Activated CD4-positive, alpha-beta T cell treated with anti-CD3 and anti-CD28 coated beads for 36 hours (primary cell): ENCODE measurements at regions of chr15 and their contacts with region 1.

Region 1: GRCh38 chr15:36501063-36501678 is 78.3 kb upstream of the CDIN1 start:
- DNase-seq: peak; percentile 7
- ATAC-seq: peak; percentile 39
- H3K4me3 Mint-ChIP-seq: no peak overlapping the region
- H3K27ac Mint-ChIP-seq: no peak overlapping the region
- H3K4me1 Mint-ChIP-seq: no peaks in the 10 kb centered on the region
- H3K27me3 Mint-ChIP-seq: peaks cover 15% of the 10 kb centered on the region

Region 2: DNA sequence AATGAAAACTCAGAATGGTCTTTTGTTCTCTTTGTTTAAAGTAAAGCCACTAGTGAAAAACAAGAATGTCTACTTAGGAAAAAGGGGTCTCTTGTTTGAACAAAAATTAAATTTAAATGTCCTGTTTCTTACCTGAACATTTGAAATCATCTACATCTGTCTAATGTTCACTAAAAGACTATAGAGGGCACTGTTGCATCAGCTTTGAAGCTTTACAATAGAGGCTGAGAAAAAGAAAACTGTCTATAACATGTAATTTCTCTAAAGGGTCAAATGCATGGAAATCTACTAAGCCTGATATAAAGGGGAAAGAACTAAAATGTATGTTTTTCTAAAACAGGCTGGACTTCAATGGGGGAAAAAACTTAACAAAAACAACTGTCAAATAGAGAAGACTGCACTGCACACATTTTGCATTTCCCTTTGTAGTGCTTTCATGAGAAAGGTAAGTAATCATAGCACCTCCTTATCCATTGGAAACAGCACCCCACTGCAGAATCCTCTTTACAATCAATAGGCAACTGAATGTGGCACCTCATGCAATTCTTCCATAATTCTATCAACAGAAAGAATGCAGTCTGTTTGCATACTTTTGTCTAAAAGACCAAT is 981.5 kb before region 1 on chr15:
- CTCF ChIA-PET with region 1: no interaction called
- POLR2A ChIA-PET with region 1: no interaction called
- intact Hi-C with region 1: loop called in 1 of 2 experiments (anchors 5 kb)
- DNase-seq: no peak
- ATAC-seq: peak; percentile 65
- H3K4me3 Mint-ChIP-seq: no peak overlapping the region
- H3K27ac Mint-ChIP-seq: no peak overlapping the region
- H3K4me1 Mint-ChIP-seq: peaks cover 4% of the 10 kb centered on the region
- H3K27me3 Mint-ChIP-seq: no peaks in the 10 kb centered on the region

Region 3: GRCh38 chr15:36653851-36654250 is 152.7 kb after region 1 on chr15:
- CTCF ChIA-PET with region 1: no interaction called
- POLR2A ChIA-PET with region 1: no interaction called
- intact Hi-C with region 1: no loop called
- DNase-seq: no peak
- ATAC-seq: no peak
- H3K4me3 Mint-ChIP-seq: no peak overlapping the region
- H3K27ac Mint-ChIP-seq: no peak overlapping the region
- H3K4me1 Mint-ChIP-seq: no peaks in the 10 kb centered on the region
- H3K27me3 Mint-ChIP-seq: no peaks in the 10 kb centered on the region

Region 4: DNA sequence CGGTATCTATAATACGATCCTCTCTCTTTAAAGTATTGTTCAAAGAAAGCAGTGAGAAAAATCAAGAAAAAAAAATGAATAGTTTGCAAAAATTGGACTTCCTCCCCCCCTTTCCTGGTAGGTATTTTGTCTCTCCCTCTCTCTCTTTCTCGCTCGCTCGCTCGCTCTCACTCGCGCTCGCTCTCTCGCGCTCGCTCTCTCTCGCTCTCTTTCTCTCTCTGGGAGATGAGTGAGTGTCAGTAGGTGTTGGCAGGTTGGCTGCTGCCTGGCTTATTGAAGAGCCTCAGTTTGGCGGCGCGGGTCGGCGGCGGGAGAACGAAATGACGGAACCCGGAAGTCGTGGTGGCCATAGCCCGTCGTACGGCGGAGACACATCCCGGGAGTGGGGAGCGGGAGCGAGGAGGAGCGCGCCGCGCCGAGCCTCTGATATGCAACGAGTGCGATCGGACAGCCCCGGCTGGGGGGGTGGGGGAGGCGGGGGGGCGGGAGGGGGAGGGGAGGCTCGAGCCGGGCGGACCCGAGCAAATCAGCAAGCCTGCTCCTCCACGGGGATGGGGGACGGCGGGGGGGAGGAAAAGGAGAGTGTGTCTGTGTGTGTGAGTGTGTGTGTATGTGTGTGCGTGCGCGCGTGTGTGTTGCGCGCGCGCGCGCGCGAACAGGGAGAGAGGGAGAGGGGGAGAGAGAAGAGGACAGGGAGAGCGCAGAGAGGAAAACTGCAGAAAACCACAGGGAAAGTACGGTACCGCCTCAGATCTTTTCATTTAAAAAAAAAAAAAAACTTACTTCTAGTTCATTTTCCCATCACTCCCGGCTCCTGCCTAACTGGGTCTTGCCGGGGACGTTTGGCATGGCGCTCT is 599.2 kb after region 1 on chr15 and contains the start of gene MEIS2:
- CTCF ChIA-PET with region 1: no interaction called
- POLR2A ChIA-PET with region 1: no interaction called
- intact Hi-C with region 1: loop called in 1 of 2 experiments (anchors 10 kb)
- DNase-seq: peak; percentile 70
- ATAC-seq: peak; percentile 63
- H3K4me3 Mint-ChIP-seq: peak within 1 kb of the TSS; percentile 80
- H3K27ac Mint-ChIP-seq: peak within 1 kb of the TSS; percentile 51
- H3K4me1 Mint-ChIP-seq: peaks cover 37% of the 10 kb centered on the region
- H3K27me3 Mint-ChIP-seq: peaks cover 82% of the 10 kb centered on the region
- total RNA-seq, gene MEIS2: not detected

Region 5: DNA sequence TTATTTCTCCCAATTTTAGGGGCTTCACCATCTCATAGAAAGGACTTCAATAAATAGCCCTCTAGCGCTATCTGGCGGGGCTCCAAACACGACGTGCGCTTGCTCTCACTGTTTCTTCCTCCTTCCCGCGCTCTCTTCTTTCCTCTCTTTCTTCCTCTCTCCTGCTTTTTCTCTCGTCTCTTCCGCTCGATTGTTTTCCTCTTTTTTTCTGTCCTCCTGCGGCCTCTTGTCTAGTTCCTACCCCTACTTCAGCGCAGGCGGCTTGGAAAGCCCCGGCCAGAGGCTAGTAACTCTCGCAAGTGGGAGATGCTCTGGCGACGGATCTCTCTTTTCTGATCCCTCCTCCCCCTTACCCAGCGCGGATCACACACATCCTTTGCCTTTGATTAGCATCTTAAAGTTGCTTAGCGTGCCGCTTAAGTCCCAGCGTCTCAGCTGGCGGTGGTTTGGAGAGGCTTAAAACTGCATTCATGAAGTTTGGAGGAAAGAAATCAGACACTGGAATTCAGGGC is 605.4 kb after region 1 on chr15:
- CTCF ChIA-PET with region 1: no interaction called
- POLR2A ChIA-PET with region 1: no interaction called
- intact Hi-C with region 1: loop called (anchors 1 to 10 kb)
- DNase-seq: peak; percentile 48
- ATAC-seq: no peak
- H3K4me3 Mint-ChIP-seq: no peak overlapping the region
- H3K27ac Mint-ChIP-seq: no peak overlapping the region
- H3K4me1 Mint-ChIP-seq: peaks cover 20% of the 10 kb centered on the region
- H3K27me3 Mint-ChIP-seq: peaks cover 88% of the 10 kb centered on the region

Region 6: DNA sequence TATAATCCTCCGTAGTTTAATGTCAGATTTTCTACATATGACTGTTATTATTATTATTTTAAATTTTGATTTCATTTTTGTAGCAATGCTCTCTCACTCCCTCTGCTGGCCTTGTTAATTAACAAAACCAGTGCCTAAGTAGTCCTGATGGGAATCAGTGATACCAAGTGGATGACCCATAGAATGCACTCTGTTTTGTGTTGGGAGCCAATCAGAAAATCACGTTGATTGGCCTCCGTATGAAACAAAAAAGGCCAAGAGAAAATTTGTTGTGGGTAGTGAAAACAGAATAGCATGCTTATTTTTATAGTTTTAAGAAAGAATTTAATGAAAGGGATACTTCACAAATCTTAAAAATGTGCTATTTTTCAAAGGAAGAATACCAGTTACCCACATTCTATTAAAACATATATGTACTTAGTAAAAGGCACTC is 633.5 kb after region 1 on chr15:
- CTCF ChIA-PET with region 1: interaction called, 3 read pairs
- POLR2A ChIA-PET with region 1: no interaction called
- intact Hi-C with region 1: loop called in 1 of 2 experiments (anchors 1 kb)
- DNase-seq: no peak
- ATAC-seq: no peak
- H3K4me3 Mint-ChIP-seq: no peak overlapping the region
- H3K27ac Mint-ChIP-seq: no peak overlapping the region
- H3K4me1 Mint-ChIP-seq: no peaks in the 10 kb centered on the region
- H3K27me3 Mint-ChIP-seq: peaks cover 12% of the 10 kb centered on the region

Region 7: GRCh38 chr15:37246065-37246464 is 744.9 kb after region 1 on chr15:
- CTCF ChIA-PET with region 1: no interaction called
- POLR2A ChIA-PET with region 1: no interaction called
- intact Hi-C with region 1: no loop called
- DNase-seq: no peak
- ATAC-seq: no peak
- H3K4me3 Mint-ChIP-seq: no peak overlapping the region
- H3K27ac Mint-ChIP-seq: no peak overlapping the region
- H3K4me1 Mint-ChIP-seq: no peaks in the 10 kb centered on the region
- H3K27me3 Mint-ChIP-seq: no peaks in the 10 kb centered on the region

Region 8: DNA sequence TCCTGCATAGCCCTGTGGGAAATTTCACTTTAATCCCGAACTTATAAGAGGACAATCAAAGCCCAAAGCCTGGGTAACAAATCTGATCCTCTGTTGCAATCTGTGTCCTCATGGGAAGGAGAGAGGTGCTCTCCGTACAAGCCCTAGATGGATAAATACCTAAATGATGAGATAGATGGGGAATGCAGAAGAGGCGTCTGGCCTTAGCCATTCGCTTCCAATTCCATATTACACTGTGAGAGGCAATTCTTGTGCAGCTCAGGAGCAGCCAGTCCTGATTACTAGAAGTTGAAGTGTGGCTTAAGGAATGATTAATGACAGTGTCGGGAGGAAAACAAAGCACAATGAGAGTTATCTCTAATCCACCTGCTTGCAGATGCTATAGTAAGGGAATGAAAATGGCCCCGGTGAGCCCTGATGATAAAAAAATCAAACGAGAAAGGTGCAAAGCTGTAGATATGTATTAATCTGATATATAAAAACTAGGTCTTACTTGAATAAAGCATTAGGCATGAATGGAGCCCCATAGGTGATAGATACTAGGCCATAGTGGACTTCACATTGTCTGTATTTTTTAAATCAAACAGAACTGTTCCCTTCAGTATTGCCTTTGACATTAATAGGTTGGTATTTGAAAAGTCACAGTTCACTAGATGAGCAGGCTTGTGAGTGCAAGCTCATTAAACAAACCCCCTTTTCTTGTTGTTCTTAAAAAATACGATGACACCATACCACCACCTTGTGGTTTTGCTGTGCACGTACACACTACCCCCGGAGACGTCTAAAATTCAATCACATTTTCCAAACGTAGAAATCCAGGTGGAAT is 1379.1 kb after region 1 on chr15:
- CTCF ChIA-PET with region 1: no interaction called
- POLR2A ChIA-PET with region 1: no interaction called
- intact Hi-C with region 1: loop called in 1 of 2 experiments (anchors 2 kb)
- DNase-seq: peak; percentile 7
- ATAC-seq: no peak
- H3K4me3 Mint-ChIP-seq: no peak overlapping the region
- H3K27ac Mint-ChIP-seq: no peak overlapping the region
- H3K4me1 Mint-ChIP-seq: no peaks in the 10 kb centered on the region
- H3K27me3 Mint-ChIP-seq: peaks cover 14% of the 10 kb centered on the region